ENCODE measurements at regions of chr16 and their contacts with region 1.

Region 1: DNA sequence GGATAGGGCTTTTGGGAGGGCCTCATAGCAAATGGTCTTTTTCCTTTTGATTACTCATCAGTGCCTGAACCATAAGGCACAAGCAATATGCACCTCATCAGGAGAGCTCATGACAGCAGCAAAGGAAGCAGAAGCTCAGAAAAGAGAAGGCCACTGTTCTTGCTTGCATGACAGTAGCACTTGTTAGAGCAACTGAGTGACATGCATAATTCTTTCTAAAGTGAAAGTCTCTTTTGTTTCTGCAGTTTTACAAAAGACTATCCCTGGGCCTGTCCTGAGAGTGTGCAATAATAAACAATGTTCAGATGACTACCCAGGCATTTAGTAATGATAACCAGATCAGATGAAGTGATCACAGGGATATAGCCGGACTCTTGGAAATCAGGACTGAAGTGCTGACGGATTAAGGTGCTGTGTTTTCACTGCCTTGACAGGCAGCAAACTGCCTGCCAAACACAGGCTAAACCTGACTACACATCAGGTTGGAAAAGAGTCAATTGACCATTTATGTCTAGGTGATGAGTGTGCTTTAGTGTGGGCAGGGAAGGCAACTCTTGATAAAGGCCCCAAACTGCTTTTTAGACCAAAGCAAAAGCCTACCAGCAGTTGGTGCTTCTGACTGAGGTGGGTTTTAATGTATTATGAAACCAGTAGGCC is 1860.3 kb downstream of the TP53TG3F start:
- DNase-seq: no peak

Region 2: DNA sequence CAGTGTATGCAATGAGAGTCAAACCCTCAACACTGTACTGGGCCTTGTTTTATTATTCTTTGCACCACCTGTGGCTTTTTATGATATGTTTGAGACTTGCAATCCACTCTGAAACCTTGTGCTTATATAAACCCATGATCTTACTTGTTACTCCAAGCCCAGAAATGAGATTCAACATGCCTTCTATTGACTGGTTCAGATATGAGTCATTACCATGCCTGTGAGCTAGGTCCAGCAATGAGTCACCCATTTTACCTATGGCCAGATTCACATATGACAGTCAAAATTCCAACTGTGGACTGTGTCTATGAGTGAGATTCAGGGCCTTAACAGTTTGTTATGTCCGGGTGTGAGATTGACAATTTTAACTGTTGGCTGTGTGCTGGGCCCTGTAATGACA is 14.2 kb before region 1 on chr16:
- intact Hi-C with region 1: no loop called
- DNase-seq: no peak

Region 3: DNA sequence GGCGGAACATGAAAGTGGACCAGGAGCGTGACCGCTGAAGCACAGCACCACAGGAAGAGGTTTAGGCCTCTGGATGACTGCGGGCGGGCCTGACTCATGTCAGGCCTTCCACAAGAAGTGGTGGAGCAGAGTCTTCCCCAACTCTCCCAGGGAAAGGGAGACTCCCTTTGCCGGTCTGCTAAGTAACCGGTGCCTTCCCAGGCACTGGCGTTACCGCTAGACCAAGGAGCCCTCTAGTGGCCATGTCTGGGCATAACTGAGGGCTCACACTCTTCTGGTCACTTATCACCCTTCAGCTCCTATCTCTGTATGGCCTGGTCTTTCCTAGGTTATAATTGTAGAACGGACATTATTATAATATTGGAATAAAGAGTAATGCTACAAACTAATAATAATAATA is 71.7 kb after region 1 on chr16:
- intact Hi-C with region 1: loop called (anchors 10 kb)
- DNase-seq: peak in 7 of 10 donors; percentile 18 to 88 (median 70)

Region 4: GRCh38 chr16:35713762-35714650 is 394.3 kb after region 1 on chr16:
- intact Hi-C with region 1: no loop called
- DNase-seq: no peak